ENCODE measurements at regions of chr12 and their contacts with region 1.

Region 1: DNA sequence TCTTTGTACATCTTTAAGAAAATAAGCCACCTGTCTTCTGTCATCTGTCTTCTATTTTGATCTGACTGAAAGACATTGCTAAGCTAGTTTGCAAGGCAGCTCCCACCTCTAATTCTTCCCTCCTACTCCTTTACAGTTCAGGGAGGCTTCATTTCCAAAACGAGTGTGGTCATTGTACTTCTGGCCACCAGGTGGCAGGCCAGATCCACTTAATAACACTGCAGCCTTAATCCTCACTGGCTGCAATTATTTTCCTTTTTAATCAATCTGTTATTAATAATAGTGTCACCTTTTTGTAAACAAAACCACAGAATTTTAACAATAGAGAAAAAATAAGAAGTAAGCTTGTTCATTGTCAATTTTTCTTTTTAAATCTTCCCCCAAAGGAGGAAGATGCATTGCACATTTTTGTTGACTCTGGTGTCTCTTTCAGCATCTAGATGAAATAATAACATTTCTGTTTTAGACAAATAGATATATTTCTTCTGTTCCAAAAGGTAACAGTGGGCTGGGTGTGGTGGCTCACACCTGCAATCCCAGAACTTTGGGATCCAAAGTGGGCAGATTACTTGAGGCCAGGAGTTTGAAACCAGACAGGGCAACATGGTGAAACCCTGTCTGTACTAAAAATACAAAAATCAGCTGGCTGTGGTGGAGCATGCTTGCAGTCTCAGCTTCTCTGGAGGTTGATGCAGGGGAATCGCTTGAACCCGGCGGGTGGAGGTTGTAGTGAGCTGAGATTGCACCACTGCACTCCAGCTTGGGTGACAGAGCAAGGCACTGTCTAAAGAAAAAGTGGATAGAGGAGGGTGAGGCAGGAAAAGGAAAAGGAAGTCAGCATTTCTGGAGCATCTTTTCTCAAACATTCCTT is 23.3 kb downstream of the GABARAPL1 start:
- DNase-seq: peak; percentile 68
- H3K4me3 ChIP-seq: no peak overlapping the region
- H3K27ac ChIP-seq: no peak overlapping the region
- H3K4me1 ChIP-seq: no peaks in the 10 kb centered on the region
- H3K27me3 ChIP-seq: no peaks in the 10 kb centered on the region
- CTCF ChIP-seq: peak; percentile 90

Region 2: GRCh38 chr12:10501031-10501430 is 265.0 kb after region 1 on chr12:
- CTCF ChIA-PET with region 1: no interaction called
- POLR2A ChIA-PET with region 1: no interaction called
- intact Hi-C with region 1: loop called (anchors 5 kb)
- DNase-seq: peak; percentile 3
- H3K4me3 ChIP-seq: no peak overlapping the region
- H3K27ac ChIP-seq: no peak overlapping the region
- H3K4me1 ChIP-seq: no peaks in the 10 kb centered on the region
- H3K27me3 ChIP-seq: peaks cover 18% of the 10 kb centered on the region
- CTCF ChIP-seq: peak; percentile 28; the same call in 1 of the 2 replicates

Region 3: GRCh38 chr12:10562306-10562933 is 326.4 kb after region 1 on chr12:
- CTCF ChIA-PET with region 1: no interaction called
- POLR2A ChIA-PET with region 1: no interaction called
- intact Hi-C with region 1: loop called (anchors 1 kb)
- DNase-seq: peak; percentile 47
- H3K4me3 ChIP-seq: no peak overlapping the region
- H3K27ac ChIP-seq: no peak overlapping the region
- H3K4me1 ChIP-seq: no peaks in the 10 kb centered on the region
- H3K27me3 ChIP-seq: no peaks in the 10 kb centered on the region
- CTCF ChIP-seq: peak; percentile 72

Region 4: DNA sequence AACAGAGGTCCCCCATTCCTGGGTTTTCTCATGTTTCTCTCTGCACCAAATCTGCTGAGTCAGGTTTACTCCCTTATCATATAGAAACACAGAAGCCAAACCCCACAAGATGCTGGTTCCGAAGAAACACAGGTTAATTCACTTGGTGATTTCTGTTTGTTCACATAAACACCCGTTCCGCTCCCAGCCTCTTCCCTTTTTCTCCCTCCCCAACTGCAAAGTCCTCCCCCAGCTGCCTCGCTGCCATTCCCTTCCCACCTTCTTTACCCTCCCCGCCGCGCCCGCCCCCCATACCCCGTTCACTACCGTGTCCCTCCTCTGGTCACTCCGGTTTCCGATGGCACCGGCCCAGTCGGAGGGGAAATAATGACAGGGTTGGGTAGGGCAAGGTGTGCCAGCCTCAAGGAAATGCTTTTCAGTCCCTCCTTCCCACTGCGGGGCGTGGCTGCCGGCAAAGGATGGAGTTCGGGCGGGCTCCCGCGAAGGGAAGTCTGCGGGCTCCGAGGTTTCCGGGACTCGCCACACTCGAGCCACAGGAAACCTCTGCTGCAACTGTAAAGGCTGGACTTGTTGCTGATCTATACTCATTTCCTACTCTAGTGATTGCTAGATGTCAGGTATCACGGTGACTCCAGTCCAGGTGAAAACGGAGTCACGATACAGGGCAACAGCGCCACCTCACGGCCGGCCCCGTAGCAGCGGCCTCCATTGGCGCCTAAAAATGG is 437.8 kb after region 1 on chr12 and contains the start of gene STYK1:
- CTCF ChIA-PET with region 1: no interaction called
- POLR2A ChIA-PET with region 1: no interaction called
- intact Hi-C with region 1: loop called (anchors 2 kb)
- DNase-seq: peak; percentile 70
- H3K4me3 ChIP-seq: peak within 1 kb of the TSS; percentile 48
- H3K27ac ChIP-seq: no peak within 1 kb of the TSS
- H3K4me1 ChIP-seq: no peaks in the 10 kb centered on the region
- H3K27me3 ChIP-seq: no peaks in the 10 kb centered on the region
- CTCF ChIP-seq: peak; percentile 96
- total RNA-seq, gene STYK1: 0.77 and 0.94 TPM in 2 replicates

Region 5: GRCh38 chr12:10749700-10750384 is 513.8 kb after region 1 on chr12:
- CTCF ChIA-PET with region 1: interaction called, 3 read pairs
- POLR2A ChIA-PET with region 1: no interaction called
- intact Hi-C with region 1: loop called (anchors 5 kb)
- DNase-seq: peak; percentile 95
- H3K4me3 ChIP-seq: peak overlapping the region; percentile 27
- H3K27ac ChIP-seq: no peak overlapping the region
- H3K4me1 ChIP-seq: no peaks in the 10 kb centered on the region
- H3K27me3 ChIP-seq: no peaks in the 10 kb centered on the region
- CTCF ChIP-seq: peak; percentile 98

Region 6: GRCh38 chr12:11486623-11487444 is 1250.8 kb after region 1 on chr12:
- CTCF ChIA-PET with region 1: no interaction called
- POLR2A ChIA-PET with region 1: no interaction called
- intact Hi-C with region 1: loop called (anchors 10 kb)
- DNase-seq: peak; percentile 93
- H3K4me3 ChIP-seq: no peak overlapping the region
- H3K27ac ChIP-seq: no peak overlapping the region
- H3K4me1 ChIP-seq: no peaks in the 10 kb centered on the region
- H3K27me3 ChIP-seq: no peaks in the 10 kb centered on the region
- CTCF ChIP-seq: peak; percentile 99